BJ (cell line): ENCODE measurements at regions of chr15 and their contacts with region 1.

Region 1: DNA sequence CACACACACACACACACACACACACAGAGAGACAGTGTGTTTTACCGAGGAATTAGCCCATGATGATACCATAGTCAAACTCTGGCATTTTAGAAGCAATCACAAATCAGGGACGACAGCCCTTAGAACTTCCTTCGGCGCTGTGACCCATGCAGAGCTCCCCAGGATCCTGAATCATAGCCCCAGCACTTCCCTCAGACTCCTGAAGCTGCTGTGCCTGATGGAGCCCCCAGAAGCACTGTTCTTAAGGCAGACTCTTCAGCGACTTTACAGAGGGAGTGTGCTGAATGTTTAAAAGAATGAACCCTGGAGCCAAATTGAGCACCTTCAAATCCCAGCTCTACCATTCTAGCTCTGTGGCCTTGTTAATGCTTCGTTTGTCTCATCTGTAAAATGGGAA is 89.3 kb upstream of the LIPC start:
- DNase-seq: no peak
- H3K4me3 ChIP-seq: no peak overlapping the region
- H3K27me3 ChIP-seq: no peaks in the 10 kb centered on the region
- CTCF ChIP-seq: no peak

Region 2: GRCh38 chr15:57878573-57878972 is 463.9 kb before region 1 on chr15:
- CTCF ChIA-PET with region 1: no interaction called
- POLR2A ChIA-PET with region 1: no interaction called
- DNase-seq: no peak
- H3K4me3 ChIP-seq: no peak overlapping the region
- H3K27me3 ChIP-seq: no peaks in the 10 kb centered on the region
- CTCF ChIP-seq: no peak

Region 3: DNA sequence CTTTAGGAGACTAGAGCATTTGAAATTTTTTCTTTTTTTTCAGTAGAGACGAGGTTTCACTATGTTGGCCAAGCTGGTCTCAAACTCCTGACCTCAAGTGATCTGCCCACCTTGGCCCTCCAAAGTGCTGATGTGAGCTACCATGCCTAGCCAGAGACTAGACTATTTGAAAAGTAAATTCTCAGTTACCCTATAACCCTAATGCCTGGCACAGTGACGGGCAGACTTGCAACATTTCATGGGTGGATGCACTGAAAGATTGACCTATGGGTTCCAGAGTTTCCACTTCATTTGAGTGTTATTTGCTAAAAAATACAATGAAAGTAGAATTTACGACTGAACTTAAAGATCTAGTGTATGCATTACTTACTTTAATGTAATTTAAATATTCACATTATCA is 43.6 kb after region 1 on chr15:
- CTCF ChIA-PET with region 1: no interaction called
- POLR2A ChIA-PET with region 1: no interaction called
- DNase-seq: no peak
- H3K4me3 ChIP-seq: no peak overlapping the region
- H3K27me3 ChIP-seq: no peaks in the 10 kb centered on the region
- CTCF ChIP-seq: no peak

Region 4: DNA sequence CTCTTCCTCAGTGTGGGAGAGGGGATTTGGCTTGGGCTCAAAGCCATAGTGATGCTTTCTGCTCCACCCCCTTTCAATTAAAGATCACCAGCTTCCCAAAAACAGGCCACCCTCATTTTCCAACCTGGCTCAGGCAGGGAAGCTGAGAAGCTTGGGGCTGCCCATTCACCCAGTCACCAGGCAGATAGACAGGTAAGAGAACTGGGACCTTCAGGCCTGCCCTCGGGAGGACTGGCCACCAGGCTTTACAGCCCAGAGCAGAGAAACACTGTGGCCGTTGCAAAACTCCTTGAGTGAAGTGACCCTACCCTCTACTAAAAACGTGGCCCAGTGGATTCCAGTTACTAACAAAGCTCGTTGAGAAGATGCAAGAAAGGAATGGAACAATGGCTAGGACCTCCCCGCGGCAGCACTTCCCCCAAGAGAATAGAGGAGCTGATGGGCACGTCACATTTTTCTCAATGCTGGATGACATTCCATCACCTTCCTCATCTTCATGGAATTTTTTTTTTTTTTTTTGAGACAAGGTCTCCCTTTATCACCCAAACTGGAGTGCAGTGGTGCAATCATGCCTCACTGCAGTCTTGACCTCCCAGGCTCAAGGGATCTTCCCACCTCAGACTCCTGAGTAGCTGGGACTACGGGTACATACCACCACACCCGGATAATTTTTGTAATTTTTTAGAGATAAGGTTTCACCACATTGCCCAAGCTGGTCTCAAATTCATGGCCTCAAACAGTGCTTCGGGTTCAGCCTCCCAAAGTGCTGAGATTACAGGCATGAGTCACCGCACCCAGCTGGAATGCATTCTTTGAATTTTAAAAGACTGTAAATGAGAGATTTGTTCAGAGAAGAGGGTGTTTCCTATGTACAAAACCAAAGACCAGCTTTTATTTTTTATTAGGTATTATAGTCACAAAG is 127.2 kb after region 1 on chr15:
- CTCF ChIA-PET with region 1: no interaction called
- POLR2A ChIA-PET with region 1: interaction called, 10 read pairs
- DNase-seq: peak; percentile 93
- H3K4me3 ChIP-seq: no peak overlapping the region
- H3K27me3 ChIP-seq: no peaks in the 10 kb centered on the region
- CTCF ChIP-seq: no peak

Region 5: DNA sequence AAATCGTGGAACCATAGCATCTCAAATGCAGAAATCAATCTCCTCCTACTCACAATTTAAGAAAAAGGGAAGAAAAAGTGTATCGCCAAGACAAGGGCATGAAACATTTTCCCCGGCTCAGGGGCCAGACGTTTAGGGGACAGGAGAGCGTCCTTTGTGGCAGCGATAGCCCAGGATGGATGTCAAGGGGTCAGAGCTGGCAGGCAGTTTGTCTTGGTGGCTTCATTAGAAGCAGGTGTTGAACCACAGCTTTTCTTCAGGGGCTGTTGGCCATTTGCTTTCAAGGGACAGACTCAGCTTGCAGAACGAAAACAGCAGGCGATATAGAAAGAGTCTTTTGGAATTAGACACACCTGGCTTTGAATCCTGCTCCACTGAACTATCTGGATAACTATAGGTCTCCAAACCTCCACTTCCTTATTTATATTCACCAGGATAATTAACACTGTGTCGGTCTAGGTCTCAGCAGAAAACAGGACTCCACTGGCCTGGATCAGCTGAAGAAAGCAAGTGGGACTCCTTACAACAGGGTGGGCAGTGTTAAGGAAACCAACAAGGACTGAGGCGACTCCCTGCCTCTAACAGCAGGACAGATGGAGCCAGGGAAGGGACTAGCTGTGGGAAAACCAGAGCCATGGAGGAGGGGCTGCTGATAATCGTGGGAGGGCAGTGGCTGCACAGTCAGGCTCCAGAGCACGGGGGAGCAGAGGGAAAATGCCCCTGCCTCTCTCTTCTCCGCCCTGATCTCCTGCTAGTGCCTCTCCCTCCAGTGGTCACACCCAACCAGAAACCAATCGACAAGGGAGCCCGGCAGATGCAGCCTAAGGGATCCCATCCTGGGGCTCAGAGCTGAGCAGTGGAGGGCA is 212.9 kb after region 1 on chr15:
- CTCF ChIA-PET with region 1: no interaction called
- POLR2A ChIA-PET with region 1: no interaction called
- DNase-seq: no peak
- H3K4me3 ChIP-seq: no peak overlapping the region
- H3K27me3 ChIP-seq: peaks cover 3% of the 10 kb centered on the region
- CTCF ChIP-seq: no peak